Heart right ventricle (tissue), 16 donors: ENCODE measurements at regions of chr4 and their contacts with region 1.

Region 1: GRCh38 chr4:141099326-141099725 is 33.9 kb downstream of the RNF150 start:
- DNase-seq: no peak
- ATAC-seq: no peak
- H3K4me3 ChIP-seq: no peak overlapping the region
- H3K27ac ChIP-seq: no peak overlapping the region
- H3K4me1 ChIP-seq: peaks cover 0 to 31% (median 3%) of the 10 kb centered on the region in 9 donors
- H3K27me3 ChIP-seq: no peaks in the 10 kb centered on the region
- CTCF ChIP-seq: no peak

Region 2: GRCh38 chr4:139887962-139888735 is 1211.2 kb before region 1 on chr4:
- intact Hi-C with region 1: loop called in 1 of 10 experiments (anchors 10 kb)
- DNase-seq: no peak
- ATAC-seq: no peak
- H3K4me3 ChIP-seq: no peak overlapping the region
- H3K27ac ChIP-seq: peak overlapping the region in 1 of 10 donors; percentile 22
- H3K4me1 ChIP-seq: peaks cover 0 to 23% (median 0%) of the 10 kb centered on the region in 9 donors
- H3K27me3 ChIP-seq: no peaks in the 10 kb centered on the region
- CTCF ChIP-seq: no peak

Region 3: DNA sequence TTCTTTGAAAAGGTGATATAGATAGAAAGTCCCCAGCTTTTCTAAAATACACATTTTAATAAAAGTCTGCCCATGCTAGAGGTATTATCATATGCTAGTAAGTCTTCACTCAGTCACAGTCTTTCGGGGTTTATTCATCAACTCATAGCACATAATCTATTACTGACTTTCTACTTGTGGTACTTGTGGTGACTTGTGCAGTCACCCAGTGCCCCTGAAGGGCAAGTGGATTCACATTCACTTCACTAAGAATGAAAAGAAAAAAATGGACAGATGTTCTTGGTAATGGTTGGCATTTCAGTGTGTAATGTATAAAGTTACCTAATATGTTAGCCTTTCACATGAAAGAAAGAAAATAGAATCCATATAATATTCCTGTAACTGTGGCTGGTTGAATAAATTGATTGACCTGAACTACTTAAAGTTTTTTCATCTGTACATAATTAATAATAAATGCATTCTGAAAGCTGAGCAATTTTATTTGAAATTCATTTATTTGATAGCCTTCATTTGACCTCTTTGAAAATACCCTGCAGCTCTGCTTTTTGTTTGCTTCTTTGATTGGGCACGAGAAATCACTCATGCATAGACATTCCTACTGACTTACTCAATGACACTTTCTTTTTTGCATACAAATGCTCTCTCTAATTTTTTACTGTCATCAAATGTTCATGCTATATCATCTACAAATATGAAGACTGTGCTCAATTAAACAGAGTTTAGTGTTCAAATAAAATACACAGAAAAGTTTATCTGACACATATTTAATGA is 81.8 kb after region 1 on chr4:
- intact Hi-C with region 1: no loop called
- DNase-seq: no peak
- ATAC-seq: no peak
- H3K4me3 ChIP-seq: no peak overlapping the region
- H3K27ac ChIP-seq: no peak overlapping the region
- H3K4me1 ChIP-seq: no peaks in the 10 kb centered on the region
- H3K27me3 ChIP-seq: no peaks in the 10 kb centered on the region
- CTCF ChIP-seq: no peak